ENCODE measurements at regions of chr2 and their contacts with region 1.

Region 1: GRCh38 chr2:111030260-111030891 is 90.3 kb upstream of the BCL2L11 start:
- DNase-seq: peak; percentile 47
- H3K4me3 Mint-ChIP-seq: peak overlapping the region; percentile 43
- H3K27ac Mint-ChIP-seq: peak overlapping the region; percentile 99
- H3K4me1 Mint-ChIP-seq: peaks cover 59% of the 10 kb centered on the region
- H3K27me3 Mint-ChIP-seq: no peaks in the 10 kb centered on the region
- CTCF ChIP-seq: no peak

Region 2: GRCh38 chr2:110993557-110994231 is 36.7 kb before region 1 on chr2:
- CTCF ChIA-PET with region 1: no interaction called
- intact Hi-C with region 1: no loop called
- DNase-seq: peak; percentile 52
- H3K4me3 Mint-ChIP-seq: no peak overlapping the region
- H3K27ac Mint-ChIP-seq: peak overlapping the region; percentile 36
- H3K4me1 Mint-ChIP-seq: peaks cover 7% of the 10 kb centered on the region
- H3K27me3 Mint-ChIP-seq: no peaks in the 10 kb centered on the region
- CTCF ChIP-seq: no peak

Region 3: DNA sequence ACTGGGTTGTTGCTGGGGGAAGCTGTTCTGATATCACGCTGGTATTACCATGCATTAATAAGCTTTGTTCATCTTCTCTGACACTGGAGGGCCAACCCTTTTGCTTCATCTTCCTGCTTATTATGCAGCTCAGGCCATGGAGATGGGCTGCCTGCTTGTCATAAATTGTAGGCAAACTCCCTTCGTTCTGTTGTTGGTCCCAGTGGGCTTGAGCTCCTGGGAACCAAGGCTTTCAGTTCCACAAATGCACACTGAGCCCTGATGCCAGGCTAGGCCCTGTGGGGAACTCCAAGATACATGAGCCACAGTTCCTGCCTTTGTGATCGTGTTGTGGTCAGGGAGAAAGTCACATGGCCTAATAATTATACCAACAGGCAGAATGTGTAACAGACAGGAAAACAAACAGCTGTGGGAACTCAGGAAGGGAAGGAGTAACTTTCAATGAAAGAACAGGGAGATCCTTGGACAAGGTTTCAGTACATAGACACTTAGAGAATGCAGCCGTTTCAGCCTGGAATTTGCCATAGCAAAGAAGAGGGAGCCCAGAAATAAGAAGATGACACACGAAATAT is 41.3 kb after region 1 on chr2:
- CTCF ChIA-PET with region 1: interaction called, 3 read pairs
- intact Hi-C with region 1: loop called (anchors 2 kb)
- DNase-seq: peak; percentile 33
- H3K4me3 Mint-ChIP-seq: peak overlapping the region; percentile 14
- H3K27ac Mint-ChIP-seq: peak overlapping the region; percentile 86
- H3K4me1 Mint-ChIP-seq: peaks cover 53% of the 10 kb centered on the region
- H3K27me3 Mint-ChIP-seq: no peaks in the 10 kb centered on the region
- CTCF ChIP-seq: no peak

Region 4: GRCh38 chr2:111100765-111101162 is 70.4 kb after region 1 on chr2:
- CTCF ChIA-PET with region 1: no interaction called
- intact Hi-C with region 1: loop called (anchors 2 kb)
- DNase-seq: no peak
- H3K4me3 Mint-ChIP-seq: no peak overlapping the region
- H3K27ac Mint-ChIP-seq: no peak overlapping the region
- H3K4me1 Mint-ChIP-seq: no peaks in the 10 kb centered on the region
- H3K27me3 Mint-ChIP-seq: no peaks in the 10 kb centered on the region
- CTCF ChIP-seq: no peak

Region 5: DNA sequence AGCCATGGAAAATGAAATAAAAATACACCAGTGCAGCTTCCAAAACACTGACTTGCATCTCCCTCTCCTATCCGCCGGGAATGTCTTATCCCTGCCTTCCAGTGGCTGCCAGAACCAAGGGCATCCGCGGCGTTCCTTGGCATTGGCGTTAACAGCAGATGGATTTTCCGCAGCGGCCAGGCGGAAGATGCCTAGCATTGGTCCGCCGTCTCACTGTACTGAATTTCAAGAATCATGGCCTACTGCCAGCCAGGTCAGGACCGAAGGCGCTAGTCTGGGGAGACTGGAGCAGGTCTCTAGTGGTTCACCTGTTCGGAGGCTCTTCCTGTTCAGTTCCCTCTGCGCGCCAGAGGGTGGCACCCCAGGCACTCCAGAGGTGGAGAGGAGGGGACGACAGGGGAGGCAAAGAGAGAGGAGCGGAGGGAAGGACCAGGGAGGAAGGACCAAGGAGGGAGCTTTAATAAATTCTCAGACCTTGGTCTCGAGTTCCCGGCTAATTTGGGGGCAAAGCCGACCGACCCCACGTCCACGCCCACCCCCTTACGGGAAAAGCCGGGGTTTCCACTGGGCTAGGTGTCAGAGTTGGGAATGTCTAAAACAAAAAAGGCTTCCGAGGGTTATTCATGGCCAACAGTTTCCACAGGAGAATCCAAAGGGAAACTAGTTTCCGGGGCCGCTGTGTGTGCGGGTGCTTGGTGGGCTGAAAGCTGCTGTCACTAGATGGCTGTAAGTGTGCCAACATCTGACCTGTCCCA is 86.6 kb after region 1 on chr2:
- CTCF ChIA-PET with region 1: interaction called, 4 read pairs
- intact Hi-C with region 1: loop called (anchors 5 kb)
- DNase-seq: peak; percentile 83
- H3K4me3 Mint-ChIP-seq: peak overlapping the region; percentile 98
- H3K27ac Mint-ChIP-seq: peak overlapping the region; percentile 67
- H3K4me1 Mint-ChIP-seq: peaks cover 27% of the 10 kb centered on the region
- H3K27me3 Mint-ChIP-seq: peaks cover 39% of the 10 kb centered on the region
- CTCF ChIP-seq: peak; percentile 78

Measured in Calu3 (cell line).